Activated CD8-positive, alpha-beta memory T cell treated with anti-CD3 and anti-CD28 coated beads, Interleukin-2, amount 10 ng/mL, durations not matched to agents 7 days and 5 days (primary cell): ENCODE measurements at regions of chr14 and their contacts with region 1.

Region 1: GRCh38 chr14:23076785-23077408 is 18.0 kb downstream of the ACIN1 start:
- DNase-seq: no peak
- ATAC-seq: peak; percentile 58
- H3K4me3 Mint-ChIP-seq: no peak overlapping the region
- H3K27ac Mint-ChIP-seq: no peak overlapping the region
- H3K4me1 Mint-ChIP-seq: peaks cover 6% of the 10 kb centered on the region
- H3K27me3 Mint-ChIP-seq: no peaks in the 10 kb centered on the region

Region 2: DNA sequence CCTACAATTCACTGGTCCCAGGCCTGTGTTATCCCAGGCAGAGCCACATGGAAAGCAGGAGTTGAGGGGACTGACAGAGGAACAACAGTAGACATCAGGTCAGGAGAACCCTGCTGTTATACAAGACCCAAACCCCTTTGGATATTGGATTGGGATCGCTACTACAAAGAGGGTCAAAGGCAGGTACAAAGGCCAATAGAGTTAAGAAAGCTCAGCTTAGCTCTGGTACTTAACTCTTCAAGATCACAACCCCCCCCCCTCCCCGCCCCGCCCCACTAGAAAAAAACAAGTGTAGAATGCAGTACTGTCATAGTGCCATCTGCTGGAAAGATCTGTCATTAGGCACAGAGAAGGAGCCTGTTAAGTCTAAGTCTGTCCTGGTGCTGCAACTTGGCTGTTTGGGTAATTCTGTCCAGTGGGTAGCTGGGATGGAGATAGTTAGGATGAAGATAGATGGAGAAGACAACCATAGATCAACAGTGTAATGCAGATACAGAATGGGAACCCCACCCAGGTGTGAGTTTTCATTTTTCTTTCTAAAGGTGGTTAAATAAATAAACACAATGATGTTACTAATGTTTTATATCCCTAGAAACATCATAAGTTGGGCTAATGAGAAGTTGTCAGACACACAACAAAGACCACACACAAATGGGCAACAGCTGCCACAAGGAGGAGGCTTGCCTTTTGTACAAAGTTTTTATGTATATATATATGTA is 176.7 kb before region 1 on chr14:
- CTCF ChIA-PET with region 1: no interaction called
- DNase-seq: peak; percentile 71
- ATAC-seq: peak; percentile 87
- H3K4me3 Mint-ChIP-seq: no peak overlapping the region
- H3K27ac Mint-ChIP-seq: peak overlapping the region; percentile 61
- H3K4me1 Mint-ChIP-seq: peaks cover 18% of the 10 kb centered on the region
- H3K27me3 Mint-ChIP-seq: no peaks in the 10 kb centered on the region

Region 3: DNA sequence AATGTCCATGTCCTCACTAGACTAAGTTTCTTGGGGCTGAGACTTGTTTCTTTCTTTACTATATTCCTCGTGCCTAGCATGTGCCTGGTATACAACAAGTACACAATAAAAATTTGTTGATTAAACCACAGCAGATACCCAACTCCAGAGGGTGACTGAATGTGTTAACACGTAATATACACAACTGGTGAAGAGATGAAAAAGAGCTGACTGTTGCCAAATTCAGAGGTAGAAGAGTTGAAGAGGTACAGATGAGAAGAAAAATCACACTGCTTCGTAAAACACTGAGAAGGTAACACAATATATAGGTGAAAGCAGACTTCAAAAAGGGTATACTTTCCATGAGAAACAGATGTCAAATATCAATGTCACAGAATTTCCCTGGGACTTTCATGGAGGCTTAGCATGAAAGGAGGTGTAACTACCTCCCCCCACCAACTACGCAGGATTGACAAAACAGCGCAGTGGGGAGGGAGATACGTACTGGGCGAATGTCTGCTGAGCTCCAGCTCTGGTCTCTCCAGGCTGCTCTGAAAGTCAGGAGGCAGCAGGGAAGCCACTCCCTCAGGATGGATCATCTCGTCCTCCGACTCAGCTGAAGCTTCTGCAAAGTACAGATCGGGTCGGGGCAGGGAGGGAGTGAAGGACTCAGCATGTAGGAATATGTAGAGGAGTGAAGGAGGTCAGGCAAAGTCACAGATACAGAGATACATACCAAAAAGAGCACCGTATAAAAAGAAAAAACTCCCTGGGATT is 12.8 kb after region 1 on chr14:
- CTCF ChIA-PET with region 1: interaction called, 33 read pairs
- DNase-seq: no peak
- ATAC-seq: no peak
- H3K4me3 Mint-ChIP-seq: no peak overlapping the region
- H3K27ac Mint-ChIP-seq: no peak overlapping the region
- H3K4me1 Mint-ChIP-seq: peaks cover 31% of the 10 kb centered on the region
- H3K27me3 Mint-ChIP-seq: no peaks in the 10 kb centered on the region

Region 4: DNA sequence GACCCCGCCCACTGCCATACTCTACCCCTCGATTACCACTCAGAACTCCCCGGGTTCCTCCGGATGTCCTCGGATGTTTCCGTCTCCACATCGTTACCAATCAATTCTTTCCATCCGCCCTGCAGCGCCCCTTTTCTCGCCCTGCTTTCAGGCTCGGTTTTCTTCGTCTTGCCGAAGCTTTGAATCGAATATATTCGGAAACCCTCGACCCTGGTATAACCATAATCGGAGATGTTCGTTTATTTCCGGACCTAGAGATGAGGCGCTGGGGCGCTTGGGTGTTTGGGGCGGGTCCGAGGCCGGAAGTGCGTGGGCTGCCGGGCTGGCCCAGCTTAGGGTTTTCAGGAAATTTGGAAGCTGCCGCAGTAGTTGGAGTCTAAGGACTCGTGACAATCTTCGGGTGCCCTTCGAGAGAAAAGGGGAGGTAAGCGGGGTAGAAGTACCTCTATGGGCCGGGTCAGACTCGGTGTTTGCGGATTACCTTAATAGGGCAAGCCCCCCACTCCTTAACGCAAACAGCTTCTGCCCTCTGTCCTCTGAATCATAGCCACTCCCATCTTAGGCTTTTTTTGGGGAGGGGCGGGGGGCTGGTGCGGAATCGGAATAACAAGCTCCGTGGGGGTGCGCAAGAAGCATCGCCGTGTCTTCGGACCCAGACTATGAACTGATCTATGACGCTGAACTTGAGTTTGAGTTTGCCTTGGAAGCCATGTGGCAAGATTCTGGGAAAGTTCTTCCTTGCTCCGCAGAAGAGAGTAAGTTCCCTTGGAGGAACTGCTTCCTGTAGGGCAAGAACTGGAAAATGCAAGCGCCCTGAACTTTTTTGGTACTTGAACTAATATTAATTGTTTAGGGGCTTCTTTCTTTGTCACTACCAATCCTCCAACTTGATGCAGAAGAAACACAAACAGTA is 18.6 kb after region 1 on chr14 and contains the start of gene C14orf119:
- CTCF ChIA-PET with region 1: interaction called, 33 read pairs
- DNase-seq: peak; percentile 100
- ATAC-seq: peak; percentile 94
- H3K4me3 Mint-ChIP-seq: no peak within 1 kb of the TSS
- H3K27ac Mint-ChIP-seq: no peak within 1 kb of the TSS
- H3K4me1 Mint-ChIP-seq: peaks cover 36% of the 10 kb centered on the region
- H3K27me3 Mint-ChIP-seq: no peaks in the 10 kb centered on the region
- total RNA-seq, gene C14orf119: 44.6 to 53.2 TPM

Region 5: DNA sequence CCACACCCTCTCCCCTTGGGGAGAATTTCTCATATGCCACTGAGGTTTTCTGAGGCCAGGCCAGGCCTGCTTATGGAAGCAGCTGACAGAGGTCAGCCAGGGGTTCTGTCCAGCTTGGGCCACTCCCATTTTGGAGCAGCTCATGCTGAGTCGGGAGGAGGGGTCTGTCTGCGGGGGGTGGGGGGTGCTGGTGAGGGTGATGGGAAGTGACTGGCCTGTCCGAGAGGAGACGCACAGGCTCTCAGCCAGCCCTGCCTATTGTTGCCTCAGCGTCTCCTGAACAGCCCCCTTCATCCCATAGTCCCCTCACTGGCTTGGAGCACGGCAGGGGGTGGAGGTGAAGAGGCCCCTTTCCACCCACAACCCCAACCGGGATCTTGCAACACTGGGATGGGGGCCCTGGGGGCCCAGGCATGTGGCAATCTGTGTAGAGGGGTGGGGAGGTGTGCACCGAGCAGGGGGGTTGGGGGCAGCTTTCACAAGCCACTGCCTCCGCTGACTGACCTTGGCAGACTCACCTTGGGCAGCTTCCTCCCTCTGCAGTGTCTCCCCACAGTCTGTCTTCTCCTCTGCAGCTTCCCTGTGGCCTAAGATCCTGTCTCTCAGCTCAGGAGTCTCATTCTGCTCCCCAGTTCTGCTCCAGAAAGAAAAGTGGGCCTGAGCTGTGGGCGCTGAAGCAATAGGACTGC is 36.7 kb after region 1 on chr14:
- CTCF ChIA-PET with region 1: interaction called, 17 read pairs
- DNase-seq: no peak
- ATAC-seq: no peak
- H3K4me3 Mint-ChIP-seq: no peak overlapping the region
- H3K27ac Mint-ChIP-seq: no peak overlapping the region
- H3K4me1 Mint-ChIP-seq: peaks cover 21% of the 10 kb centered on the region
- H3K27me3 Mint-ChIP-seq: peaks cover 3% of the 10 kb centered on the region